PC-9 (cell line): ENCODE measurements at regions of chrX and their contacts with region 1.

Region 1: GRCh38 chrX:118345401-118346257 is at the start of gene WDR44:
- DNase-seq: peak; percentile 95 to 97
- H3K4me3 ChIP-seq: peak within 1 kb of the TSS; percentile 71
- H3K27ac ChIP-seq: peak within 1 kb of the TSS; percentile 80
- H3K4me1 ChIP-seq: peaks cover 37% of the 10 kb centered on the region
- H3K27me3 ChIP-seq: no peaks in the 10 kb centered on the region
- CTCF ChIP-seq: no peak
- total RNA-seq, gene WDR44: 24.4 and 30.9 TPM in 2 replicates

Region 2: GRCh38 chrX:118226090-118226428 is 119.6 kb before region 1 on chrX:
- CTCF ChIA-PET with region 1: no interaction called
- POLR2A ChIA-PET with region 1: no interaction called
- intact Hi-C with region 1: no loop called
- DNase-seq: no peak
- H3K4me3 ChIP-seq: no peak overlapping the region
- H3K27ac ChIP-seq: no peak overlapping the region
- H3K4me1 ChIP-seq: peaks cover 11% of the 10 kb centered on the region
- H3K27me3 ChIP-seq: no peaks in the 10 kb centered on the region
- CTCF ChIP-seq: peak; percentile 67

Region 3: GRCh38 chrX:118356154-118356701 is 10.6 kb after region 1 on chrX:
- CTCF ChIA-PET with region 1: interaction called, 3 read pairs
- POLR2A ChIA-PET with region 1: interaction called, 7 read pairs
- intact Hi-C with region 1: loop called (anchors 1 kb)
- DNase-seq: no peak
- H3K4me3 ChIP-seq: no peak overlapping the region
- H3K27ac ChIP-seq: peak overlapping the region; percentile 48
- H3K4me1 ChIP-seq: peaks cover 41% of the 10 kb centered on the region
- H3K27me3 ChIP-seq: no peaks in the 10 kb centered on the region
- CTCF ChIP-seq: no peak

Region 4: GRCh38 chrX:118370921-118371624 is 25.4 kb after region 1 on chrX:
- CTCF ChIA-PET with region 1: no interaction called
- POLR2A ChIA-PET with region 1: interaction called, 10 read pairs
- intact Hi-C with region 1: no loop called
- DNase-seq: no peak
- H3K4me3 ChIP-seq: no peak overlapping the region
- H3K27ac ChIP-seq: no peak overlapping the region
- H3K4me1 ChIP-seq: no peaks in the 10 kb centered on the region
- H3K27me3 ChIP-seq: no peaks in the 10 kb centered on the region
- CTCF ChIP-seq: no peak

Region 5: DNA sequence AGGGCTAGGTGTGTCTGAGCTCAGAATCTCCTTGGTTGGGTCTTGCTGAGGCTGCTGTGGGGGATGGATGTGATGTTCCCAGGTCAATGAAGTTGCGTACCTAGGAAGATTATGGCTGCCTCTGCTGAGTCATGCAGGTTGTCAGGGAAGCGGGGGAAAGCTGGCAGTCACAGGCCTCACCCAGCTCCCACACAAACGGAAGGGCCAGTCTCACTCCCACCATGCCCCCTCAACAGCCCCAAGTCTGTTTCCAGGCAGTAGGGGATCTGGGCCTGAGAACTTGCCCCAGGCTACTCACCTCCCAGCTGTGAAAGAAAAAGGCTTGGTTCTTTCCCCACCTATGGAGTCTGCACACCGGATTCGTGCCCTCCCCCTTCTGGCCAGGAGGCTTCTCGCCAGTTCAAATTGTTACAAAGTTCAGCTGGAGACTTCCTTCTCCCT is 73.2 kb after region 1 on chrX:
- CTCF ChIA-PET with region 1: no interaction called
- POLR2A ChIA-PET with region 1: no interaction called
- intact Hi-C with region 1: loop called (anchors 1 kb)
- DNase-seq: peak in 1 of 2 experiments; percentile 61
- H3K4me3 ChIP-seq: no peak overlapping the region
- H3K27ac ChIP-seq: no peak overlapping the region
- H3K4me1 ChIP-seq: no peaks in the 10 kb centered on the region
- H3K27me3 ChIP-seq: no peaks in the 10 kb centered on the region
- CTCF ChIP-seq: no peak

Region 6: DNA sequence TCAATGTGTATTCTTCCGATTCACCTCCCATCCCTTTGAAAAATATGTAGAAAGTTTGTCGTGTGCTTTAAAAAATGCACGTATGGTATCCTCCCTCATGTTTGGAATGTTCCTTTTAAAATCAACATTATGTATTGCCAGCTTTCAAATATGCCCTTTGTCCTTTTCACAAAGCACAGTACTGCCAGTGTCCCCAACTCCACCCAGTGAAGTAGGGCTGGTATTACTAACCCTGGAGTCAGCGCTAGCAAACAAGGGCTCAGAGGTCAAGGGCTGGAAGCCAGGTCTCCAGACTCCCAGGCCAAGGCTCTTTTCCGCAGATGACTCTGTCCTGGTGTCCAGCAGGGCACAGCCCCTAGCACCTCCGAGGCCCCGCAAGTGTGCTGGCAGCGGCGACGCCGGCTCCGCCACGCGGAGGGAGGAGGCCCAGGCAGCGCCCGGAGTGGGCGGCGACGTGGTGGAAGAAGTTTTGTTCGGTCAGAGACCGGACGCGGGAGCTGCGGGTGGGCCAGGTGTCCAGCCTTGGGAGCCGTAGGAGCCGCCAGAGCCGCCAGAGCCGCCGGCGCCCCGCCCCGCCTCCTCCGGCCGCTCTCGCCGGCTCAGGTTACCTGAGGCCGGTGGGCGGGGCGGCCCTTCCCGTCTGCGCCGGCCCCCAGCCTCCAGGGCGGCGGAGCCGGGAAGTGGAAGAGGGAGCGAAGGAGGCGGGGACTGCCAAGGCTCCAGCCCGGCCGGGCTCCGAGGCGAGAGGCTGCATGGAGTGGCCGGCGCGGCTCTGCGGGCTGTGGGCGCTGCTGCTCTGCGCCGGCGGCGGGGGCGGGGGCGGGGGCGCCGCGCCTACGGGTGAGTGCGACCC is 381.5 kb after region 1 on chrX and contains the start of gene IL13RA1:
- CTCF ChIA-PET with region 1: no interaction called
- POLR2A ChIA-PET with region 1: no interaction called
- intact Hi-C with region 1: loop called (anchors 5 kb)
- DNase-seq: peak; percentile 86 to 95
- H3K4me3 ChIP-seq: peak within 1 kb of the TSS; percentile 90
- H3K27ac ChIP-seq: peak within 1 kb of the TSS; percentile 95
- H3K4me1 ChIP-seq: peaks cover 69% of the 10 kb centered on the region
- H3K27me3 ChIP-seq: no peaks in the 10 kb centered on the region
- CTCF ChIP-seq: no peak
- total RNA-seq, gene IL13RA1: 85.3 and 106 TPM in 2 replicates